GM10248 (cell line): ENCODE measurements at regions of chr2 and their contacts with region 1.

Region 1: DNA sequence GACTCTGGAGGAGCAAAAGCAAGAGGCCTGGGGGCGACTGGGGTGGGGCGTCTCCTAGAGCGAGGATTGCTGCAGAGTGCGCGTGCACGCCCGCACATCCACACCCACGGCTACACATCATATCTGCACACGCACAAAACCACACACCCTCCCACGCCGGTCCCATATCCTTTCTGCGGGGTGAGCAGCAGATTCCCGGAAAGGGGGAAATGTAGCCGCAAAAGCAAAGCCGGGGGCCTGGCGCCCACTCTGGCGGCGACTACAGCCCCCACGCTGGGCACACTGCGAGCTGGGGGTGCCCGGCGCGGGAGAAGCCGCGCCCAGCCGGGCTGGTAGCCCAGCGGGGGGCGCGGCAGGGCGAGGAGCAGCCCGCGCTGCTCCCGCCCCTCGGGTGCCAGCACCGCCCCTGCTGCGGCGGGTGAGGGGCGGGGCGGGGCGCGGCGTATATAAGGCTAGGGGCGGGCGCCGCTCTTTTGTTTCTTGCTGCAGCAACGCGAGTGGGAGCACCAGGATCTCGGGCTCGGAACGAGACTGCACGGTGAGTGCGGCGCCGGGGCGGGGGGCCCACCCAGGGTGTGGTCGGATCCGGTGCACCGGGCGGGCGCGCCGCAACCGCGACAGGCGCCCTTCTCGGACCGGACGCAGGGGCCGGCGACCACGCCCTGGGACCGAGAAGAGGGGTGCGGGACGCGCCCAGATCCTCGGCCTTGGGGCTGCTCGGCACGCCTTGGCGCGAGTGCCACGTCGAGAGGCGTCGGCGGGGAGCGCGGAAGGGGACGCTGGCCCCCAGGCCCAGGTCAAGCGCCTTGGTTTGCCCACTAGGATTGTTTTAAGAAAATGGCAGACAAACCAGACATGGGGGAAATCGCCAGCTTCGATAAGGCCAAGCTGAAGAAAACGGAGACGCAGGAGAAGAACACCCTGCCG is at the start of gene TMSB10:
- DNase-seq: peak; percentile 93
- CTCF ChIP-seq: peak; percentile 8

Region 2: DNA sequence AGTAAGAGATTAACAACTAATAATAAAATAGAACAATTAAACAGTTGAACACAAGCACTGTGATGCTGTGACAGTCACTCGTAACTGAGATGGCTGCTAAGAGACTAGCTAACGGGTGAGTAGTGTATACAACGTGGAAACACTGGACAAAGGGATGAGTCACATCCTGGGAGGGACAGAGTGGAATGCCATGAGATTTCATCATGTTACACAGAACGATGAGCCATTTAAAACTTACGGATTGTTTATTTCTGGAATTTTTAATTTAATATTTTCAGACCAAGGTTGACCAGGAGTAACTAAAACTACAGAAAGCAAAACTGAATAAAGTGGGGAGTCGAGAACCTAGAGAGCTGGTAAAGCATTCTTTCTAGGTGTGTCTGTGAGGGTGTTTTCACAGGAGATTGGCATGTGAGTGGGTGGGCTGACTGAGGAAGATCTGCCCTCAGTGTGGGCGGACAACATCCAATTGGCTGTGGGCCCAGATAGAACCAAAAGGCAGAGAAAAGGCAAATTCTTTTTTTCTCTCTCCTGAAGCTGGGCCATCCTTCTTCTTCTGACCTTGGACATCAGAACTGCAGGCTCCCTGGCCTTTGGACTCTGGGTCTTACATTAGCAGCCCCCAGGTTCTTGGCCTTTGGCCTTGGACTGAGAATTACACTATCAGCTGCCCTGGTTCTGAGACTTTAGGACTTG is 14.6 kb after region 1 on chr2:
- CTCF ChIA-PET with region 1: interaction called, 112 read pairs
- POLR2A ChIA-PET with region 1: interaction called, 23 read pairs
- DNase-seq: no peak
- CTCF ChIP-seq: no peak

Region 3: GRCh38 chr2:84939426-84940087 is 34.1 kb after region 1 on chr2:
- CTCF ChIA-PET with region 1: interaction called, 4 read pairs
- POLR2A ChIA-PET with region 1: interaction called, 13 read pairs
- DNase-seq: peak; percentile 78
- CTCF ChIP-seq: no peak

Region 4: GRCh38 chr2:85354286-85355072 is 449.0 kb after region 1 on chr2 and contains the starts of genes ELMOD3 and RETSAT:
- CTCF ChIA-PET with region 1: no interaction called
- POLR2A ChIA-PET with region 1: interaction called, 13 read pairs
- DNase-seq: peak; percentile 97
- CTCF ChIP-seq: no peak